Panc1 (cell line): ENCODE measurements at regions of chr1 and their contacts with region 1.

Region 1: GRCh38 chr1:226332947-226333346 is 24.0 kb upstream of the LIN9 start:
- DNase-seq: no peak
- ATAC-seq: no peak; the same call in 1 of the 2 replicates
- H3K4me3 ChIP-seq: peak overlapping the region; percentile 16 to 38; a peak in 2 of 4 replicates
- H3K27ac ChIP-seq: no peak overlapping the region
- H3K4me1 ChIP-seq: no peaks in the 10 kb centered on the region; the same call in 1 of the 2 replicates
- H3K27me3 ChIP-seq: no peaks in the 10 kb centered on the region
- CTCF ChIP-seq: no peak

Region 2: DNA sequence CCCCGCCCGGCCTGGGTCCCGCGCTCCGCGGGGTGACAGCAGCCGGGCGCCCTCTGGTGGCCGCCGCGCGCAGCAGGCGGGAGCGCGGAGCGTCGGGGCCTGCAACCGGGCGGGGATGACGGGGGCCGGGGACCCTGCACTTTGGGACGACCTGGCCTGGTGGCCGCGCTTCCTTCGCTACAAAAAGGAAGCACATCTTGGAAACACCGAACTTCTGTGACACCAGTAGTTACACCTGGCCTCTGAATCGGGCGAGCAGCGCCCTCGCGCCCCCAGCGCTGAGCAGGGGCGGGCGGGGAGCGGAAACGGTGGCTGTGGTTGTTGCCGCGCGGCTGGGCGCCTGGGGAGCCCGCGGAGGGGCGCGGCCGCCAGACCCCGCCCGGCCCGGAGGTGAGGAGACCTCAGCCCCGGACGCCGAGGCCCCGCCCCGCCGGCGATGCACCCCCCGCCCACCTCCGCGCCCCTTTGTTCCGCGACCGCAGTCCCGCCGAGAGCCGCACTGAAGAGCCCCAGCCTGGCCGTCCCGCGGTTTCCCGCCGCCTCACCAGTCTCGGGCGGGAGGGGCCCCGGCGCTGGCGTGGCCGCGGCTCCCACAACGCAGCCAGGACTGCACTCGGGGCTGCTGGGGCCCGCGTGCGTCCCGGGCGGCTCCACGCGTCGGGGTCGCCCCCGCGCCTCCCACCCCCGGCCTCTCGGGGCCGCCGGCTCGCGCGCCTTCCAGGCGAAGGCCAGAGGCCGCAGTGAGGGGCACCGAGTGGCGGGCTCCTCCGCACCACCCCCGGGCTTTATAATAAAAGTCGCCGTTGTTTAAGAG is 211.2 kb before region 1 on chr1:
- CTCF ChIA-PET with region 1: interaction called, 10 read pairs
- POLR2A ChIA-PET with region 1: no interaction called
- in situ Hi-C with region 1: no loop called
- intact Hi-C with region 1: loop called (anchors 10 kb)
- DNase-seq: no peak
- ATAC-seq: peak; percentile 85
- H3K4me3 ChIP-seq: peak overlapping the region; percentile 50 to 61
- H3K27ac ChIP-seq: peak overlapping the region; percentile 48; the same call in 1 of the 2 replicates
- H3K4me1 ChIP-seq: peaks cover 18% of the 10 kb centered on the region
- H3K27me3 ChIP-seq: no peaks in the 10 kb centered on the region
- CTCF ChIP-seq: peak; percentile 98

Region 3: GRCh38 chr1:226135059-226135651 is 197.8 kb before region 1 on chr1:
- CTCF ChIA-PET with region 1: no interaction called
- POLR2A ChIA-PET with region 1: no interaction called
- in situ Hi-C with region 1: no loop called
- intact Hi-C with region 1: no loop called
- DNase-seq: no peak
- ATAC-seq: peak; percentile 50; the same call in 1 of the 2 replicates
- H3K4me3 ChIP-seq: no peak overlapping the region
- H3K27ac ChIP-seq: no peak overlapping the region
- H3K4me1 ChIP-seq: no peaks in the 10 kb centered on the region
- H3K27me3 ChIP-seq: no peaks in the 10 kb centered on the region
- CTCF ChIP-seq: no peak

Region 4: DNA sequence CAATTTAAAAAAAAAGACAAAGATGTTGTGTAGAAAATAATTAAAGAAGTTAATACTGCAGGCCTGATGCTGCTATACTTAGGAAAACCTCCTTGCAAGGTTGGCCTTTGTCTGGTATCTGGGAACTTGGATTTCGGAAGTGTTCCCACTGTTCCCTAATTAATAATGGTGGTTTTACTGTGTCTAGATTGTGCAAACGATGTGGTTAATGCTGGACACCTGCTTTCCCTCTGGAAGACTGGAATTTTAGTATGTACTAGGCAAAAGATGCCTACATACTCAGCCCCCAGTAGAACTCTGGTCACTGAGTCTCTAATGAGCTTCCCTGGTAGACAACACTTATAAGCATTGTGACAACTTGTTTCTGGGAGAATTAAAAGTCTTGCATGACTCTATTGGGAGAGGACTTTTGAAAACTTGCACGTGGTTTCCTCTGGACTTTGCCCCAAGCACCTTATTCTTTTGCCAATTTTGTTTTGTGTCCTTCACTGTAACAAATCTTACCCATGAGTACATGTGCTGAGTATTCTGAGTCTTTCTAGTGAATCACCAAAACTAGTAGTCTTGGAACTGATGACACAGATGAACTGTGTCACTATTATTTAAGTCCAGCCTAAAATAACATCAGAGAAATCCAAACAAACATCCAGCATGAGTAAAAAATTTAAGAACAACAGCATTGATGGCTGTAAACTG is 64.4 kb before region 1 on chr1:
- CTCF ChIA-PET with region 1: no interaction called
- POLR2A ChIA-PET with region 1: no interaction called
- in situ Hi-C with region 1: no loop called
- intact Hi-C with region 1: no loop called
- DNase-seq: peak; percentile 8
- ATAC-seq: no peak
- H3K4me3 ChIP-seq: no peak overlapping the region
- H3K27ac ChIP-seq: no peak overlapping the region
- H3K4me1 ChIP-seq: peaks cover 5% of the 10 kb centered on the region; the same call in 1 of the 2 replicates
- H3K27me3 ChIP-seq: no peaks in the 10 kb centered on the region
- CTCF ChIP-seq: no peak